Heart right ventricle (tissue), 16 donors: ENCODE measurements at regions of chr12 and their contacts with region 1.

Region 1: GRCh38 chr12:95940514-95940913 is 1.9 kb downstream of the CCDC38 start:
- DNase-seq: no peak
- ATAC-seq: no peak
- H3K4me3 ChIP-seq: no peak overlapping the region
- H3K27ac ChIP-seq: no peak overlapping the region
- H3K4me1 ChIP-seq: peaks cover 0 to 14% (median 10%) of the 10 kb centered on the region in 9 donors
- H3K27me3 ChIP-seq: peaks cover 0 to 6% (median 0%) of the 10 kb centered on the region in 7 donors
- CTCF ChIP-seq: no peak

Region 2: DNA sequence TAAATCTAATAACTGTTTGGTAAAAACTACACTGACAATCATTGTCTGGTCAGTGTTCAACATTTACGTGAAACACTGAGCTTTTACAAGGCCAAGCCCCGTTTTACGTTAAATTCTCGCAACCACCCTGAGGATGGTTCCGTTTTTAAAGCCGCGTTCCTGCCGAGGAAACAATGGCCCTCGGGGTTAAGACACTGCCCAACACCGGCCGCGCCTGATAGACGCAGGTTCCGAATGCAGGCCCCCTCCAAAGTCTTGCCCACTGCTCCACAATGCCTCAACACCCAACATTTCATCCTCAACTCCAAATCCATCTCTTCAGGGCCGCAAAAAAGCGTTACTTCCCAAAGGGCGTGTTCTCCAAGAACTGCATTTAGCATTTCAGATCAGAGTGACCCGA is 82.7 kb before region 1 on chr12:
- intact Hi-C with region 1: loop called in 1 of 10 experiments (anchors 1 kb)
- DNase-seq: no peak
- ATAC-seq: no peak
- H3K4me3 ChIP-seq: peak overlapping the region in 6 of 10 donors; percentile 61 to 85 (median 70)
- H3K27ac ChIP-seq: no peak overlapping the region
- H3K4me1 ChIP-seq: peaks cover 8 to 31% (median 20%) of the 10 kb centered on the region in 9 donors
- H3K27me3 ChIP-seq: peaks cover 0 to 24% (median 0%) of the 10 kb centered on the region in 7 donors
- CTCF ChIP-seq: no peak